ENCODE measurements at regions of chr3 and their contacts with region 1.

Region 1: GRCh38 chr3:113714702-113715101 is 18.3 kb upstream of the USF3 start:
- DNase-seq: no peak
- H3K4me3 Mint-ChIP-seq: no peak overlapping the region
- H3K27ac Mint-ChIP-seq: no peak overlapping the region
- H3K4me1 Mint-ChIP-seq: peaks cover 6% of the 10 kb centered on the region
- H3K27me3 Mint-ChIP-seq: no peaks in the 10 kb centered on the region
- CTCF ChIP-seq: no peak

Region 2: DNA sequence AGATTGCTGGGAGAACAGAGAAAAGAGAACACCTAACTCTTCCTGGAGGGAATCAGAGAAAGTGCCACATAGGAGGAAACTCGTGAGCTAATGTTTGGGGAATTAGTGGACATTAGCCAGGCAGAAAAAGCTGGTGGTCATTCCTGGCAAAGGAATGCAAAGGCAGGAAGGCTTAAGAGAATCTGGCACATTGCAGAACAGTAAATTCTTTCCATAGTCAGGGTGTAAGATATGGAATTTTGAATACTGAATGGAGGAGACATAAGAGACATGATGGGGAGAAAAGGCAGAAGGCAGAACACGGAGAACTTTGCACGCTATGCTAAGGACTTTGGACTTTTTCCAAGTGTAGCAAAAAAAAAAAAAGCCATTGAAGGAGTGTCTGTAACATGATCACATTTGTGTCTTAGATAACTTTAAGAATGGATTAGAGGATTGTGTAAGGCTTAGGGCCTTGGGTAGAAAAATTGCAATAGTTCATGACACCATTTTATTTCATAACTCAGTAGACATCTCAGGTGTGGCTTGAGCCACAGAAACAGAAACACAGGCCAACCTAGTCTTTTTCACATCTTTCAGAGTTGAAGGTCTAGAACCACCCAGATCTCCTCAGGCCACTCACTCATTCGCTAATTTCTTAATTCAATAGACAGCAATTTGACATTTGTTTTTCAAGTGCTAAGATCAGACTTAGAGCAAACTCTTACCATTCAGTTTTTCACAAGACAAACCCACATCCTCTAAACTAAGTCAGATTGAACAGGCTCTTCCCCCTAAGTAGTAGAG is 1042.6 kb before region 1 on chr3:
- CTCF ChIA-PET with region 1: no interaction called
- POLR2A ChIA-PET with region 1: no interaction called
- intact Hi-C with region 1: no loop called
- DNase-seq: peak; percentile 90
- H3K4me3 Mint-ChIP-seq: peak overlapping the region; percentile 7
- H3K27ac Mint-ChIP-seq: peak overlapping the region; percentile 26
- H3K4me1 Mint-ChIP-seq: peaks cover 39% of the 10 kb centered on the region
- H3K27me3 Mint-ChIP-seq: no peaks in the 10 kb centered on the region
- CTCF ChIP-seq: no peak

Region 3: GRCh38 chr3:113535898-113536297 is 178.8 kb before region 1 on chr3:
- CTCF ChIA-PET with region 1: no interaction called
- POLR2A ChIA-PET with region 1: no interaction called
- intact Hi-C with region 1: no loop called
- DNase-seq: no peak
- H3K4me3 Mint-ChIP-seq: no peak overlapping the region
- H3K27ac Mint-ChIP-seq: peak overlapping the region; percentile 66
- H3K4me1 Mint-ChIP-seq: peaks cover 26% of the 10 kb centered on the region
- H3K27me3 Mint-ChIP-seq: peaks cover 35% of the 10 kb centered on the region
- CTCF ChIP-seq: no peak

Region 4: GRCh38 chr3:113728661-113729060 is 14.0 kb after region 1 on chr3:
- CTCF ChIA-PET with region 1: interaction called, 4 read pairs
- POLR2A ChIA-PET with region 1: interaction called, 13 read pairs
- intact Hi-C with region 1: no loop called
- DNase-seq: no peak
- H3K4me3 Mint-ChIP-seq: no peak overlapping the region
- H3K27ac Mint-ChIP-seq: no peak overlapping the region
- H3K4me1 Mint-ChIP-seq: peaks cover 20% of the 10 kb centered on the region
- H3K27me3 Mint-ChIP-seq: no peaks in the 10 kb centered on the region
- CTCF ChIP-seq: no peak

Measured in MCF 10A (cell line).